ENCODE measurements at regions of chr5 and their contacts with region 1.

Region 1: GRCh38 chr5:154610321-154611154 is 132.5 kb upstream of the HAND1 start:
- DNase-seq: peak; percentile 43 to 92
- H3K4me3 ChIP-seq: no peak overlapping the region
- CTCF ChIP-seq: no peak
- POLR2A ChIP-seq: no peak

Region 2: GRCh38 chr5:154467655-154468354 is 142.7 kb before region 1 on chr5:
- intact Hi-C with region 1: loop called (anchors 5 kb)
- DNase-seq: peak; percentile 57 to 95
- H3K4me3 ChIP-seq: no peak overlapping the region
- CTCF ChIP-seq: no peak
- POLR2A ChIP-seq: no peak